ENCODE measurements at regions of chr2 and their contacts with region 1.

Region 1: GRCh38 chr2:84925724-84926376 is 20.4 kb downstream of the TMSB10 start:
- DNase-seq: peak; percentile 96 to 100
- H3K4me3 ChIP-seq: peak overlapping the region in 3 of 4 experiments; percentile 28 to 53 (median 45); a peak in 6 of 8 replicates
- H3K27ac ChIP-seq: no peak overlapping the region
- H3K4me1 ChIP-seq: peaks cover 0 to 10% (median 2%) of the 10 kb centered on the region in 4 experiments; a peak in 2 of 7 replicates
- H3K27me3 ChIP-seq: peaks cover 0 to 9% (median 3%) of the 10 kb centered on the region in 4 experiments; a peak in 2 of 7 replicates
- CTCF ChIP-seq: peak; percentile 96 to 99 (median 97)
- EP300 ChIP-seq: peak in 1 of 2 experiments; percentile 37; a peak in 1 of 3 replicates
- POLR2A ChIP-seq: no peak
- RAD21 ChIP-seq: peak; percentile 81 to 89

Region 2: GRCh38 chr2:84686783-84687476 is 238.9 kb before region 1 on chr2:
- CTCF ChIA-PET with region 1: no interaction called
- POLR2A ChIA-PET with region 1: no interaction called
- DNase-seq: no peak
- H3K4me3 ChIP-seq: no peak overlapping the region
- H3K27ac ChIP-seq: no peak overlapping the region
- H3K4me1 ChIP-seq: no peaks in the 10 kb centered on the region
- H3K27me3 ChIP-seq: no peaks in the 10 kb centered on the region
- CTCF ChIP-seq: no peak
- EP300 ChIP-seq: no peak
- POLR2A ChIP-seq: no peak
- RAD21 ChIP-seq: no peak

Region 3: GRCh38 chr2:84881581-84882414 is 44.1 kb before region 1 on chr2:
- CTCF ChIA-PET with region 1: interaction called, 38 read pairs
- POLR2A ChIA-PET with region 1: interaction called, 3 read pairs
- DNase-seq: peak in 1 of 2 experiments; percentile 92
- H3K4me3 ChIP-seq: peak overlapping the region; percentile 48 to 75 (median 62)
- H3K27ac ChIP-seq: no peak overlapping the region
- H3K4me1 ChIP-seq: peaks cover 0 to 3% (median under 1%) of the 10 kb centered on the region in 4 experiments; a peak in 3 of 7 replicates
- H3K27me3 ChIP-seq: peaks cover 12 to 42% (median 39%) of the 10 kb centered on the region in 4 experiments
- CTCF ChIP-seq: peak; percentile 66 to 86 (median 72)
- EP300 ChIP-seq: no peak
- POLR2A ChIP-seq: peak in 1 of 2 experiments; percentile 12; a peak in 1 of 3 replicates
- RAD21 ChIP-seq: peak; percentile 80 to 82

Region 4: DNA sequence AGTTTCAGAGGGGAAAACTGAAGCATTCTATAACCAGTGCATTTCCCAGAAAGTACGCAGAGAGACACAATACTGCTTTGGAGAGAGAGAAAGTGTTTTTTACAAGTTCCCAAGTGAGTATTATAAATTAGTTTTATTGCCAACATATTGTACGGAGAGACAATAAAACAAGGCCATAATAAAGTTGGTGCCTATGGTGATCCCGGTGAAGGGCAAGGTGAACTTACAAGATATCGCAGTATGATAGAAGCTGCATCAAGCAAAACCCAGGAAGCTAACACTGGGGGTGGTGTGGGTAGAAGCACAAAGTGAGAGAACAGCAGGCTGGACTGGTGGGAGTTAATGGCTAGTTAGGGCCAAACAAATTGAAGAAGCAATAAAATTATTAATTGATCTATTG is 12.9 kb before region 1 on chr2:
- CTCF ChIA-PET with region 1: interaction called, 26 read pairs
- POLR2A ChIA-PET with region 1: interaction called, 16 read pairs
- DNase-seq: no peak
- H3K4me3 ChIP-seq: no peak overlapping the region
- H3K27ac ChIP-seq: no peak overlapping the region
- H3K4me1 ChIP-seq: no peaks in the 10 kb centered on the region; a peak in 1 of 7 replicates
- H3K27me3 ChIP-seq: no peaks in the 10 kb centered on the region; a peak in 1 of 7 replicates
- CTCF ChIP-seq: no peak
- EP300 ChIP-seq: no peak
- POLR2A ChIP-seq: no peak
- RAD21 ChIP-seq: no peak

Region 5: DNA sequence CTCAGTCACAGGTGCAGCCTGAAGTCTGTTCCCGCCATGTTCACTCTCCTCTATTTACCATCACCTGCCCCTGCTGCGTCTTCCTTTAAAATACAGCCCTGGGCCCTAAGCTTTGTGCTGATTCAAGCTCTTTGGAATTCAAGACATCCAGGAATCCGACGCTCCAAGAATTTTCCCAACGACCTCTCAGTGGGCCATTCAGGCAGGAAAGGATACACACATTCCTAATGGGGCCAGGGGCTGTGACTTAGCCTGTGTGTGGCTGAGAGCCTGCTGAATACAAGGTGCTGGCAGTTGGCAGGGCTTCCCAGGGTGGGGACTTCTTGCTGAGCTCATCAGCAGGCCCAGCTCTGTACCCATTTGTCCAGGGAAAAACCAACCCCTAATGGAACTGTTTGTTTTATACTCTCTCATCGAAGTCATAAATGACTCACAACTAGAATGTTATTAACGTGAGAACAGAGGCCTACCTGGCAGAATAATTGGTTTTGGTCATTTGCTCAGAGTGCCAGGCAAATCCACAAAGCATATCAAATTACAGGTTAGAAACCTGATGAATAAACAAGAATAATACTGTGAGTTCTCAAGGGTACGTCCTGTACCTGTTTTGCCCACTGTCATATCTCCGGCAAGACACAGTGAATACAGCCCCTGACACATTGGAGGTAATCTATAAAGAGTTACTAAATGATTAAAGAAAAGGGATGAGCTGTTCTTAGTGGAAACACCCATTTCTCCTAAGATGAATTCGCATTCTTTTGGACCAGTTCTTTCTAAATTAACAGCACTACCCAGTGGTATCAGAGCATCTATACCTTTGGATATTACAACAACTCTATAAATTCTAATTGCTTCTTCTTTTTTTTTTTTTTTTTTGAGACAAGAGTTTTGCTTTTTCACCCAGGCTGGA is 32.5 kb after region 1 on chr2:
- CTCF ChIA-PET with region 1: interaction called, 46 read pairs
- POLR2A ChIA-PET with region 1: interaction called, 36 read pairs
- DNase-seq: peak; percentile 78 to 99
- H3K4me3 ChIP-seq: peak overlapping the region in 1 of 4 experiments; percentile 42; a peak in 2 of 8 replicates
- H3K27ac ChIP-seq: peak overlapping the region; percentile 92
- H3K4me1 ChIP-seq: peaks cover 11 to 37% (median 33%) of the 10 kb centered on the region in 4 experiments
- H3K27me3 ChIP-seq: no peaks in the 10 kb centered on the region
- CTCF ChIP-seq: no peak
- EP300 ChIP-seq: peak in 1 of 2 experiments; percentile 96; a peak in 2 of 3 replicates
- POLR2A ChIP-seq: peak; percentile 44 to 91
- RAD21 ChIP-seq: peak in 1 of 2 experiments; percentile 21; a peak in 3 of 4 replicates

Region 6: GRCh38 chr2:85032621-85033020 is 106.8 kb after region 1 on chr2:
- CTCF ChIA-PET with region 1: interaction called, 13 read pairs
- POLR2A ChIA-PET with region 1: no interaction called
- DNase-seq: no peak
- H3K4me3 ChIP-seq: no peak overlapping the region
- H3K27ac ChIP-seq: no peak overlapping the region
- H3K4me1 ChIP-seq: peaks cover 0 to 5% (median under 1%) of the 10 kb centered on the region in 4 experiments; a peak in 2 of 7 replicates
- H3K27me3 ChIP-seq: no peaks in the 10 kb centered on the region
- CTCF ChIP-seq: no peak
- EP300 ChIP-seq: no peak
- POLR2A ChIP-seq: no peak
- RAD21 ChIP-seq: no peak

Region 7: GRCh38 chr2:85188852-85189587 is 263.2 kb after region 1 on chr2:
- CTCF ChIA-PET with region 1: no interaction called
- POLR2A ChIA-PET with region 1: no interaction called
- DNase-seq: no peak
- H3K4me3 ChIP-seq: no peak overlapping the region
- H3K27ac ChIP-seq: no peak overlapping the region
- H3K4me1 ChIP-seq: peaks cover 2 to 9% (median 6%) of the 10 kb centered on the region in 4 experiments; a peak in 5 of 7 replicates
- H3K27me3 ChIP-seq: no peaks in the 10 kb centered on the region
- CTCF ChIP-seq: peak; percentile 14 to 30 (median 24)
- EP300 ChIP-seq: no peak
- POLR2A ChIP-seq: no peak
- RAD21 ChIP-seq: peak; percentile 16 to 35; a peak in 2 of 4 replicates

Region 8: GRCh38 chr2:85234868-85235267 is 309.0 kb after region 1 on chr2:
- CTCF ChIA-PET with region 1: no interaction called
- POLR2A ChIA-PET with region 1: no interaction called
- DNase-seq: no peak
- H3K4me3 ChIP-seq: no peak overlapping the region; a peak in 1 of 8 replicates
- H3K27ac ChIP-seq: peak overlapping the region; percentile 66; the same call in 1 of the 2 replicates
- H3K4me1 ChIP-seq: peaks cover 42 to 68% (median 51%) of the 10 kb centered on the region in 4 experiments
- H3K27me3 ChIP-seq: no peaks in the 10 kb centered on the region
- CTCF ChIP-seq: no peak
- EP300 ChIP-seq: no peak
- POLR2A ChIP-seq: no peak
- RAD21 ChIP-seq: no peak